ENCODE measurements at regions of chr16 and their contacts with region 1.

Region 1: DNA sequence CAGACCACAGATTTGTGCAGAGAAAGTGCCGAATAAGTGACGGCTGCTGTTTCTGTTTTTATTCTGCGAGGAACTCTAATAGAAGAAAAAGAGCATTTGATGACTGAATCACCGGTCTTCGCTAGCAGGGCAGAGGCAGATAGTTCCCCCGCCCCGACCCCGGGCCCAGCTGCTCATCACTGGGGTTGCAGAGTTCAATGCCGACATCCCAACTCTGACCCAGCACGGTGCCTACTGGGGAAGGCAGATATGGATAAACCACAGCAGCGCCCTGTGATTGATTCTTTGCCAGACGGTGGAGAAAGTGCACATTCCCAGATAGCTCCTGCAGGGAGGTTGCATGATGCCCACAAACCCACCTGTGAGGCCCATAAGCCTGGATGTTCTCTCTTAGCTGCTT is 357.9 kb upstream of the HSBP1 start:
- DNase-seq: no peak
- ATAC-seq: no peak

Region 2: DNA sequence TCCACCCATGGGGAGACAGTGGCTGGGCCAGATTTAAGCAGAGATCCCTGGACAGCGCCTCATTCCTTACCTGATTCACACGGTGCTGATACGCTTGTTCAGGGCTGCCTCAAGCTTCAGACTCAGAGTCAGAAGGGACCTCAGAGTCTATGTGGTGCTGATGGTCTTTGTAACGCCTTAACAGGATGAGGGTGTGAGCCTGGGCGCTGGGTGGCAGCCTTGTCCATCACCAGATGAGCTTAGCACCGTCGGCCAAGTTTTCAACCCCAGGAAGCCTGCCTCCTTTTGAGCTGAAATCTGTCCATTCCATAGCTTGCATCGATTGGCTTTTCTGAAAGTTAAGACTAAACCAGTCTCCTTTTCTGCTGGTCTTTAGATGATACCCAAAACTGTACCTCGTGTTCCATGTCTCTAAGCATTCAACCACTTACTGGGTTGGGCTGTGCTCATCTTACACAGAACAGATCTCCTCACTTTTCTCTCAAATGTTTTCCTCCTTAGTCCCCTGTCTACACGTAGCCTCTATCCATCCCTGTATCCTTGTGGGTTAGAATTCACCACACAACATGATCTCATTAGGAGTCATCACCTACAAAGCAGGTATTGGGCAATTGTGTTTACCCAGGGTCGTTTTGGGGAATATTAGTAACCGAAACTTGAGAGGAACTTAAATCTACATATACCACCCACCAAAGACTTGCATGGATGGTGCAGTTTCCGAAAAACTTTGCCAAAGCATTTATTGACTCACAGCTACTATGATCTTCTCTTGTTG is 249.7 kb before region 1 on chr16:
- intact Hi-C with region 1: loop called in 1 of 2 experiments (anchors 5 kb)
- DNase-seq: peak; percentile 35
- ATAC-seq: peak; percentile 71 to 81

Region 3: DNA sequence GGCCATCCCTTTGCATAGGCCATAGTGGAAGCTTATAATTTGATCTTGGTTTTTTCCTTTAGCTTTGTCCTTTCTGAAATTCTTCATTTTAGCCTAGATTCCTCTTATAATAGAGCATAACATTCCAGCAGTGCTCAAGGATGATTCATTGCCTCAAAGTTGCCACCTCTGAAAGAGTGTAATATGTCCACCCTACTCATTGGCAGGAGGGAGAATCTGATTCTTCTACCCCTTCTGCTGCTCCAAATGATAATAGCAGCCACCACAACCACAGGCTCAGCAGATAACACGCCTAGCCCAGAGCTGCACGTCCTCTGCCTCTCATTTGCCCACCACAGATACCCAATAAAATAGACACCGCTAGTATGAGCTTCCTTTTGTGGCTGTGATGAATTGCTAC is 20.6 kb after region 1 on chr16:
- intact Hi-C with region 1: no loop called
- DNase-seq: no peak
- ATAC-seq: no peak